ENCODE measurements at regions of chr7 and their contacts with region 1.

Region 1: DNA sequence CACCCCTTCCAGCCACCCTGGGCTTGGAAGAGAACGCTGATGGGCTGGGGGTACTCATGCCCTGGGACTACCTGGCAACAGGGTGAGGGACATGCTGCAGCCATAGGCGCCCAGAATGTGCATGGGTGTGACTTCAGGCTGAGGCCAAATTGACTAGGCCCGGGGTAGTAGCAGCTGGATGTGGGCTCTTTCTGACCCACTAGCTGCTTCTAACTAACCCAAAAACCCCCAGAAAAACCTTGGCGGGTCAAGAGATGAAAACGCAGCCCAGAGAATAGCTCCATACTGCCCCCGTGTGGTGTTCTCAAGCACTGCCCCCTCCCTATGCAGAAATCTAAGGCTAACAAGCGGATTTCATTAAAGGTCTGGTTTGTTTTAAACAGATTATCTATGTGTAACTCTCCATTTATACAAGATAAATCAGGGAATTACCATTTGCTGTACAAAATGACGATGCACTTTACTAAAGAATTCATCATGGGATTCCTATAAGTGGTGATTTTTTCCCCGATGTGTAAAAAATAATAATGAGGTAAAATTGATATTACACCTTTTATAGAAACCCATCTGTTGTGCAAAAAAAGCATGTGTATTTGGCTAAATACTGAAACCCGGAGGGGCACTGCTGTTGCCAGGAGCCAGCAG is 4.2 kb downstream of the SMARCD3 start:
- DNase-seq: peak; percentile 72
- H3K4me3 ChIP-seq: peak overlapping the region in 4 of 8 donors; percentile 32 to 70 (median 38)
- H3K27ac ChIP-seq: no peak overlapping the region
- H3K4me1 ChIP-seq: peaks cover 40 to 68% (median 55%) of the 10 kb centered on the region in 6 donors
- H3K27me3 ChIP-seq: peaks cover 0 to 57% (median 10%) of the 10 kb centered on the region in 7 donors
- CTCF ChIP-seq: peak; percentile 58 to 93 (median 83)
- POLR2A ChIP-seq: no peak

Region 2: GRCh38 chr7:150924369-150924781 is 319.9 kb before region 1 on chr7:
- intact Hi-C with region 1: no loop called
- DNase-seq: no peak
- H3K4me3 ChIP-seq: no peak overlapping the region
- H3K27ac ChIP-seq: no peak overlapping the region
- H3K4me1 ChIP-seq: no peaks in the 10 kb centered on the region
- H3K27me3 ChIP-seq: peaks cover 0 to 7% (median 0%) of the 10 kb centered on the region in 7 donors
- CTCF ChIP-seq: no peak
- POLR2A ChIP-seq: no peak

Region 3: GRCh38 chr7:151304856-151305255 is 60.5 kb after region 1 on chr7:
- intact Hi-C with region 1: loop called (anchors 10 kb)
- DNase-seq: no peak
- H3K4me3 ChIP-seq: no peak overlapping the region
- H3K27ac ChIP-seq: no peak overlapping the region
- H3K4me1 ChIP-seq: peaks cover 7 to 30% (median 12%) of the 10 kb centered on the region in 6 donors
- H3K27me3 ChIP-seq: peaks cover 5 to 68% (median 23%) of the 10 kb centered on the region in 7 donors
- CTCF ChIP-seq: no peak
- POLR2A ChIP-seq: no peak

Region 4: DNA sequence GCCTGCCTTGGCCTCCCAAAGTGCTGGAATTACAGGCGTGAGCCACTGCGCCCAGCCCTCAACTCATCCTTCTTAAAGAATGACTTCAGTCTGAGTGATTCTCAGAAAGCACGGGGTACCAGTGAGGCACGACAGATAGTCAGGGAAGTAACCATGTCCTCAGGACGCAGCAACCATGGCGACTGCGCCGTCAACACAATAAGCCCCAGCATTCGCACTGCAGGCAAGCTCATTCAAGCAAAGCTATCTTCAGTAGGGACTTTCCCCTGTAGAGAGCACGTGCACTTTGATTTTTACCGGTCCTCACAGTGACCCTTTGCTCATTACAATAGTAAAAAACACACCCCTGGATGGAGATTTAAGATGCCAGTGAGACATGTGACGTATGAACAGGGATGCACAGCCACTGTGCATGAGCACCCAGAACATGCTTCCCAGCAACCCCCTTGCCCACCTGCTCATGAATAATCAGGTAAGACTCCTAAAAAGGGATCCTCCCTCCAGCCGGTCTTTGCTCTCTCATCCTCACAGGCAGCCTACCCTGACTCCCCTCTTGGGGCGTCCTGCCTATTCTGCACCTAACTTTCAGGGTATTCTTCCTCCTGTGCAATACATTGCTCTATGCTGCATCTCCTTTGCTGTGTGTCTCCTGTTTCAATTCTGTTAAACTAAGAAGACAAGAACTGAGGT is 156.5 kb after region 1 on chr7:
- intact Hi-C with region 1: no loop called
- DNase-seq: peak; percentile 84
- H3K4me3 ChIP-seq: no peak overlapping the region
- H3K27ac ChIP-seq: peak overlapping the region in 2 of 8 donors; percentile 12 to 48
- H3K4me1 ChIP-seq: peaks cover 14 to 87% (median 52%) of the 10 kb centered on the region in 6 donors
- H3K27me3 ChIP-seq: no peaks in the 10 kb centered on the region
- CTCF ChIP-seq: peak in 2 of 11 experiments; percentile 10 to 17
- POLR2A ChIP-seq: no peak

Region 5: GRCh38 chr7:151863386-151864079 is 619.2 kb after region 1 on chr7:
- intact Hi-C with region 1: no loop called
- DNase-seq: peak; percentile 36
- H3K4me3 ChIP-seq: no peak overlapping the region
- H3K27ac ChIP-seq: no peak overlapping the region
- H3K4me1 ChIP-seq: peaks cover 0 to 40% (median 15%) of the 10 kb centered on the region in 6 donors
- H3K27me3 ChIP-seq: no peaks in the 10 kb centered on the region
- CTCF ChIP-seq: no peak
- POLR2A ChIP-seq: no peak

Measured in spleen (tissue), 13 donors.